AG04449 (cell line): ENCODE measurements at regions of chr1 and their contacts with region 1.

Region 1: GRCh38 chr1:212291505-212292134 is 6.4 kb downstream of the PPP2R5A start:
- DNase-seq: no peak
- H3K4me3 ChIP-seq: no peak overlapping the region
- CTCF ChIP-seq: peak; percentile 57

Region 2: DNA sequence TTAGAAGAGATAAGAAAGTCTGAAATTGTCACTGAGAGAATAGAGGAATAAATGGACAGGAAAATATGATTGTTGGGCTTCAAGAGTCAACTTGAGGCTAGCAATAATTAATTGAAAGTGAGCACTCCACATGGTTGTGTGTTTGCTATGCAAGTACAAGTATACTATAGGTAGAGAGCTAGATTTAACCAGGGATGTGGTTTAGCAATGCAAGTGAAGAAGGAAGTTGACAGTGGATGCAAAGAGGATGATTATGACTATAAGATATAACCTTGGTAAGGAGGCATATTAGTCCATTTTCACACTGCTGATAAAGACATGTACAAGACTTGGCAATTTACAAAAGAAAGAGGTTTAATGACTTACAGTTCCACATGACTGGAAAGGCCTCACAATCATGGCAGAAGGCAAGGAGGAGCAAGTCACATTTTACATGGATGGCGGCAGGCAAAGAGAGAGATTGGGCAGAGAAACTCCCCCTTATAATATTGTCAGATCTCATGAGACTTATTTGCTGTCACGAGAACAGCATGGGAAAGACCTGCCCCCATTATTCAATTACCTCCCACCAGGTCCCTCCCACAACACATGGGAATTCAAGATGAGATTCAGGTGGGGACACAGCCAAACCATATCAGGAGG is 208.7 kb before region 1 on chr1:
- CTCF ChIA-PET with region 1: interaction called, 16 read pairs
- POLR2A ChIA-PET with region 1: no interaction called
- DNase-seq: no peak
- H3K4me3 ChIP-seq: no peak overlapping the region
- CTCF ChIP-seq: no peak

Region 3: GRCh38 chr1:212302745-212303383 is 11.2 kb after region 1 on chr1:
- CTCF ChIA-PET with region 1: interaction called, 18 read pairs
- POLR2A ChIA-PET with region 1: no interaction called
- DNase-seq: no peak
- H3K4me3 ChIP-seq: no peak overlapping the region
- CTCF ChIP-seq: no peak

Region 4: GRCh38 chr1:212315907-212316306 is 24.3 kb after region 1 on chr1:
- CTCF ChIA-PET with region 1: interaction called, 19 read pairs
- POLR2A ChIA-PET with region 1: no interaction called
- DNase-seq: no peak
- H3K4me3 ChIP-seq: no peak overlapping the region
- CTCF ChIP-seq: no peak